Right ventricle myocardium inferior (tissue), 1 donor: ENCODE measurements at regions of chr15 and their contacts with region 1.

Region 1: DNA sequence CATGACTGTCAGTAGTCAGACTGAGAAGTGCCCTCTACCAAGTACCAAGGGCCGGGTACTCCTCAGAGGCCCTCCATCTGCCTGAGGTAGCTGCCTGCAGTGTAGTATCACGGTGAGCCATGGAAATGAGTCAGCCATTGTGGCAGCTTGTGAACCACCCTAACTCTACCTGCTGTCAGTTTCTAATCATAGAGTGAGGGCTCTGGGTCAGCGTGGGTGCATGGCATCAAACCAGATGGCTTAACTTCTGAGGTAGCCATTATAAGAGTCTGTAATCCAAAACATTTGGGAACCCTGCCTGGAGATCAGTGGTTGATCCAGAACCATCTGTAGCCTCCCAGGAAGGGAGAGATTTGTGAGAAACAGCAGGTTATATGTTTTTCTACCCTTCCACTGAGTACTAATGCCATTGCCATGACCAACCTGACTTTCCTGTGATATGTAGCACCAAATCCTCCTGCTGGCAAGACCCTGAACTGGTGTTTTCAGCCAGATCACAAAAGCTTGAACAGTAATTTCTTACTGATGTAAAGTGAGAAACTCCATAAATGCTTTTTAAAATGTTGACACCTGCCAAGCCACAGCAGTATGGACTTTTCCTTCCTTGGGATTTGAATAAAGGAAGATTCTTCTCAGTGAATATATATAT is 38.9 kb downstream of the ABHD2 start:
- DNase-seq: no peak
- ATAC-seq: peak; percentile 21

Region 2: DNA sequence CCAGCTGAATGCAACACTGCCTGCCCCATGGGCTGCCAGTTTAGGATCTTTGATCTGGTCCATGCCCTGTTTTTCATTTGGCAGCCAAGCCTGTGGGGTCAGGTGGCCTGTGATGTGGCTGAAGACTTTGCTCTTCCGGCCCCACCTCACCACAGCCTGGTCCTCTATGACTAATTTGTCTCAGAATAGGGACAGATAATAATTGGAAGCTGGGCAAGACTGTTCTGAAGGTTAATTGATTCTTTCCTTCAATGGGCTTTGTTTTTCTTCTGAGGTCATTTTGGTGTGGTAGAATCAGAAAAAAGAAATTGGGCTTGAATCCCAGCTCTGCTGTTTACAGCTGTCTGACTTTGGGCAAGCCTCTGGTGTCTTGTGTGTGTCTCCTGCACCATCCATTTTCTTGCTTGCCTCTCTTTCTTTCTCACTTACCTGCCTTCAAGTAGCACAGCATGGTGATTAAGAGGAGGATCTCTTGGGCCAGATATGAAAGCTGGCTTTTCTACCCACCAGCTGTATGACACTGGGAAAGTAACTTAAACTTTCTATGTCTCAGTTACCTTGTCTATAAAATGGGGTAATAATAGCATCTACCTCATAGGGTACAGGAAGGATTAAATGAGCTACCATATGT is 14.7 kb before region 1 on chr15:
- intact Hi-C with region 1: loop called (anchors 2 kb)
- DNase-seq: no peak
- ATAC-seq: peak; percentile 21